Activated naive CD4-positive, alpha-beta T cell treated with anti-CD3 and anti-CD28 coated beads for 36 hours (primary cell): ENCODE measurements at regions of chr5 and their contacts with region 1.

Region 1: DNA sequence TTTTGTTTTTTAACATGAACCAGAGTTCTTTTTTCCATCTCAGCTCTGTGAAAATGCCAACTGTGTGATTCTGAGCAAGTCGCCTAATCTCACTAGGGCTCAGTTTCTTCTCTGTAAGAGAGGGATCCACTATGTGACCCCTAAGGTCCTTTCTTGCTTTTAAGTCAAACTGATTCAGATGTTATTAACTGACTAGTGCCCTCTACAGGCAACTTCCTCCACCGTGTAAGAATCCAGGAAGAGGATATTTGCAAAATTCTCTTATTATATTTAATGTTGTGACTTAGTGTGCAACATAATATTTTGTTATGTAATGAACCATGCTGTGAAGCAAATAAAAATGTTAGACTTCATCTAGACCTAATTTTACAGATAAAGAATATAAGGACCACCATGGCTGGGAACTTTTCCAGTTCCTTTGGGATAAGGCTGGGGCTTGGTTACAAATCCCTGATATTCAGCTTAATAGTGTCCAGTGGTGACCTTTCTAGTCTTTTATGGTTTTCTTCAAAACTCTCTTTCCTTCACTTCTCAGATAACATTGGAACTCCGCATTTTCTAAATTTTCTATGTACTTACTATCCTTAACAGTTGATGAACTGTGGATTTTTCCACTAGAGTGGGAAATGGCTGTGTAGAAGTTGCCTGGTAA is 244.7 kb downstream of the PIK3R1 start:
- DNase-seq: peak; percentile 66
- H3K4me3 Mint-ChIP-seq: no peak overlapping the region
- H3K27ac Mint-ChIP-seq: no peak overlapping the region
- H3K4me1 Mint-ChIP-seq: peaks cover 8% of the 10 kb centered on the region
- H3K27me3 Mint-ChIP-seq: no peaks in the 10 kb centered on the region

Region 2: DNA sequence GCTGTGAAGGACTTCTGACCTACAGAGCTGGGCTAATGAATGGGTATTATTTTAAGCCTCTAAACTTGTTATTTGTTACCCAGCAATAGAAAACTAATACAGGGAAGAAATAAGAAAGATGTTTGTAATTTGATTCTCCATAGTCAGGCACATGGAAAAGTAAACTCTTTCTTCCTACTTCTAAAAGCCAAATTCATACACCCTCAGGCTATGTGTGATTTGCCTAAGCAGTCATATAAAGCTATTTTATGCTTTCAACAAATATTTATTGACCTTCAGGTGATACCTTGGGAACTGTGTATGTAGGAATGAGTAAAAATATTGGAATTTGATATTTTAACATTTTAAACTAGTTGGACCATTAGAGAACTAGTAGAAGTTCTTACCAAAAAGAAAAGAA is 363.2 kb before region 1 on chr5:
- CTCF ChIA-PET with region 1: no interaction called
- intact Hi-C with region 1: no loop called
- DNase-seq: no peak
- H3K4me3 Mint-ChIP-seq: no peak overlapping the region
- H3K27ac Mint-ChIP-seq: no peak overlapping the region
- H3K4me1 Mint-ChIP-seq: no peaks in the 10 kb centered on the region
- H3K27me3 Mint-ChIP-seq: no peaks in the 10 kb centered on the region

Region 3: GRCh38 chr5:68303038-68303738 is 157.1 kb before region 1 on chr5:
- CTCF ChIA-PET with region 1: no interaction called
- intact Hi-C with region 1: loop called (anchors 5 kb)
- DNase-seq: no peak
- H3K4me3 Mint-ChIP-seq: no peak overlapping the region
- H3K27ac Mint-ChIP-seq: peak overlapping the region; percentile 51
- H3K4me1 Mint-ChIP-seq: peaks cover 30% of the 10 kb centered on the region
- H3K27me3 Mint-ChIP-seq: no peaks in the 10 kb centered on the region

Region 4: GRCh38 chr5:68441309-68442073 is 18.8 kb before region 1 on chr5:
- CTCF ChIA-PET with region 1: interaction called, 5 read pairs
- intact Hi-C with region 1: loop called (anchors 1 kb)
- DNase-seq: peak; percentile 53
- H3K4me3 Mint-ChIP-seq: no peak overlapping the region
- H3K27ac Mint-ChIP-seq: no peak overlapping the region
- H3K4me1 Mint-ChIP-seq: peaks cover 14% of the 10 kb centered on the region
- H3K27me3 Mint-ChIP-seq: peaks cover 10% of the 10 kb centered on the region

Region 5: GRCh38 chr5:68962757-68963484 is 502.6 kb after region 1 on chr5:
- CTCF ChIA-PET with region 1: no interaction called
- intact Hi-C with region 1: loop called (anchors 5 kb)
- DNase-seq: peak; percentile 51
- H3K4me3 Mint-ChIP-seq: no peak overlapping the region
- H3K27ac Mint-ChIP-seq: no peak overlapping the region
- H3K4me1 Mint-ChIP-seq: peaks cover 1% of the 10 kb centered on the region
- H3K27me3 Mint-ChIP-seq: no peaks in the 10 kb centered on the region